ENCODE measurements at regions of chr12 and their contacts with region 1.

Region 1: DNA sequence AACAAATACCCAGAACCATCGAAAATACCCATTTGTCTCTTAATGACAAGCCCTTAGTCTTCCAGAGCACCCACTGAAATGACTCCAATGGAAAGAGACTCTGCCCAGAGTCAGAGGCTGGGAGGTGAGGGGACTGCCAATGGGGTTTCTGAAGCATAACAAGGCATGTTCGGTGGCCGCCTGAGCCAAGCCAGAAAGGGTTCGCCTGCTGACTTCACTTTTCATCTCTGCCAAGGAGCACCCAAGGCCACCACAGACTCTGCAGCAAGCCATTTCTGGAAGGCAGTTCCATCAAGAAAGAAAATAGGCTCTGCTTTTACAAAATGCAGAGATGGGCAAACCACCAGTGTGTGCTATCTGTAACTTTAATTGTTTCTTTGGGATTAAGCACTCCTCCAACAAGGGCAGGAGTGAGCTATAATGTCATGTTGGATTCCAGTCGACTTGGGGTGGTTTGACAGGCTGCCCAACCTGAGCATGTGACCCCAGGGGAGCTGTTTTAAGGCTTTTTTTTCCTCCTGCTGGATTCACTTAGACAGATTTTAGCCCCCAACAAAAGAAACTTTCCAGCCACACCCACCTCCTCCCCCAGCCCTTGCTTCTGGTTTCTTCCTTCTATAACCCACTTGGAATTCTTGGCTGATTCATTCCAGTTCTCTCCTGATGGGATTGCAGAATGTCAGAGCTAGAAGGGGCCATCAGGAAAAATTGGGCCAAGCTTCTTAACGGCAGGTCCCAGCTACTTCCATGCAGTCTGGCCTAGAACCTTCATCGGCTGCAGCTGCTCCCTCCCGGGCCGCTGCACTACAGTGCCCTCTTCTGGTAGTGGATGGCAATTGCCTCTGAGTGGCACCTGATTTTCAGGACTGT is 24.1 kb downstream of the CKAP4 start:
- DNase-seq: peak; percentile 54
- ATAC-seq: peak; percentile 96
- H3K4me3 ChIP-seq: no peak overlapping the region
- H3K27ac ChIP-seq: no peak overlapping the region
- H3K4me1 ChIP-seq: no peaks in the 10 kb centered on the region
- H3K27me3 ChIP-seq: peaks cover 11% of the 10 kb centered on the region
- CTCF ChIP-seq: peak; percentile 93
- POLR2A ChIP-seq: 0 out of 2 replicates have a peak, but pooled peaks have one; percentile 28
- RAD21 ChIP-seq: peak; percentile 95

Region 2: GRCh38 chr12:105420659-105421240 is 803.0 kb before region 1 on chr12:
- CTCF ChIA-PET with region 1: interaction called, 3 read pairs
- POLR2A ChIA-PET with region 1: no interaction called
- dilution Hi-C with region 1: no loop called
- in situ Hi-C with region 1: loop called (anchors 5 kb)
- intact Hi-C with region 1: loop called (anchors 1 kb)
- DNase-seq: peak; percentile 77
- ATAC-seq: peak; percentile 64
- H3K4me3 ChIP-seq: no peak overlapping the region
- H3K27ac ChIP-seq: no peak overlapping the region
- H3K4me1 ChIP-seq: peaks cover 13% of the 10 kb centered on the region
- H3K27me3 ChIP-seq: no peaks in the 10 kb centered on the region
- CTCF ChIP-seq: peak; percentile 97
- POLR2A ChIP-seq: peak; percentile 69
- RAD21 ChIP-seq: peak; percentile 100

Region 3: GRCh38 chr12:106010741-106011140 is 213.0 kb before region 1 on chr12:
- CTCF ChIA-PET with region 1: no interaction called
- POLR2A ChIA-PET with region 1: no interaction called
- dilution Hi-C with region 1: no loop called
- in situ Hi-C with region 1: no loop called
- intact Hi-C with region 1: no loop called
- DNase-seq: peak; percentile 37
- ATAC-seq: peak; percentile 54
- H3K4me3 ChIP-seq: no peak overlapping the region
- H3K27ac ChIP-seq: no peak overlapping the region
- H3K4me1 ChIP-seq: peaks cover 3% of the 10 kb centered on the region
- H3K27me3 ChIP-seq: no peaks in the 10 kb centered on the region
- CTCF ChIP-seq: no peak
- POLR2A ChIP-seq: no peak
- RAD21 ChIP-seq: no peak

Region 4: DNA sequence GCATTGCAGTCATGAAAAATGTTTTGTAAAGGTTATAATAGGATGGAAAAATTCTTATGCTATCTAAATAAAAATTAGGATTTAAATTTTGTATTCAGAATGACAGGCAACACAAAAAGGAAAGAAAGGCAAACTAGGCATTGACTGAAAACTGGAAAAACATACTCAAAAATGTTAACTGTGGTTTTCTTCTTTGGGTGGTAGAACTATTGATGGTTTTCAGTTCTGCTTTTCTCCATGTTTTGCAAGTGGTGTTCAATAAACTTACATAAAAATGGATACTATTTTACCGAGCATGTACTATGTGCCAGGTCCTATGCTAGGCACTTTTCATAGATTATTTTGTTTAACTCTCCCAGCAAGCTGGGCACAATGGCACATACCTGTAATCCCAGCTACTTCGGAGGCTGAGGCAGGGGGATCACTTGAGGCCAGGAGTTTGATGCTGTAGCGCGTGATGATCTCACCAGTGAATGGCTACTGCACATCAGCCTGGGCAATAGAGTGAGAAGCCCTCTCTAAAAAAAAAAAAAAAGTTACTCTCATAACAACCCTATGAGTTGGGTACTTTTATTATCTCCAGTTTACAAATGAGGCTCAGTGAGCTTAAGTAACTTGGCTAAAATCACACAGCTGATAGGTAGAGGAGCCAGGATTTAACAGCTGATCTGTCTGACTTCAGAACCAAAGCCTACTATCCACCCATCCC is 52.5 kb after region 1 on chr12:
- CTCF ChIA-PET with region 1: interaction called, 13 read pairs
- POLR2A ChIA-PET with region 1: no interaction called
- dilution Hi-C with region 1: no loop called
- in situ Hi-C with region 1: no loop called
- intact Hi-C with region 1: no loop called
- DNase-seq: no peak
- ATAC-seq: no peak
- H3K4me3 ChIP-seq: no peak overlapping the region
- H3K27ac ChIP-seq: no peak overlapping the region
- H3K4me1 ChIP-seq: no peaks in the 10 kb centered on the region
- H3K27me3 ChIP-seq: peaks cover 13% of the 10 kb centered on the region
- CTCF ChIP-seq: no peak
- POLR2A ChIP-seq: no peak
- RAD21 ChIP-seq: no peak

Region 5: GRCh38 chr12:106342397-106343213 is 118.9 kb after region 1 on chr12:
- CTCF ChIA-PET with region 1: interaction called, 3 read pairs
- POLR2A ChIA-PET with region 1: no interaction called
- dilution Hi-C with region 1: no loop called
- in situ Hi-C with region 1: loop called (anchors 5 kb)
- intact Hi-C with region 1: no loop called
- DNase-seq: peak; percentile 75
- ATAC-seq: peak; percentile 94
- H3K4me3 ChIP-seq: peak overlapping the region; percentile 15; the same call in 1 of the 2 replicates
- H3K27ac ChIP-seq: no peak overlapping the region
- H3K4me1 ChIP-seq: peaks cover 3% of the 10 kb centered on the region
- H3K27me3 ChIP-seq: no peaks in the 10 kb centered on the region
- CTCF ChIP-seq: no peak
- POLR2A ChIP-seq: no peak
- RAD21 ChIP-seq: no peak

Region 6: GRCh38 chr12:106601031-106601430 is 377.3 kb after region 1 on chr12:
- CTCF ChIA-PET with region 1: no interaction called
- POLR2A ChIA-PET with region 1: no interaction called
- dilution Hi-C with region 1: no loop called
- in situ Hi-C with region 1: no loop called
- intact Hi-C with region 1: no loop called
- DNase-seq: no peak
- ATAC-seq: no peak
- H3K4me3 ChIP-seq: no peak overlapping the region
- H3K27ac ChIP-seq: no peak overlapping the region
- H3K4me1 ChIP-seq: no peaks in the 10 kb centered on the region
- H3K27me3 ChIP-seq: peaks cover 17% of the 10 kb centered on the region
- CTCF ChIP-seq: no peak
- POLR2A ChIP-seq: no peak
- RAD21 ChIP-seq: no peak

Region 7: GRCh38 chr12:106841510-106842302 is 618.0 kb after region 1 on chr12:
- CTCF ChIA-PET with region 1: no interaction called
- POLR2A ChIA-PET with region 1: no interaction called
- dilution Hi-C with region 1: no loop called
- in situ Hi-C with region 1: no loop called
- intact Hi-C with region 1: loop called (anchors 5 kb)
- DNase-seq: peak; percentile 45
- ATAC-seq: peak; percentile 65
- H3K4me3 ChIP-seq: no peak overlapping the region
- H3K27ac ChIP-seq: no peak overlapping the region
- H3K4me1 ChIP-seq: peaks cover 5% of the 10 kb centered on the region
- H3K27me3 ChIP-seq: no peaks in the 10 kb centered on the region
- CTCF ChIP-seq: peak; percentile 65
- POLR2A ChIP-seq: no peak
- RAD21 ChIP-seq: peak; percentile 72